ENCODE measurements at regions of chr3 and their contacts with region 1.

Region 1: DNA sequence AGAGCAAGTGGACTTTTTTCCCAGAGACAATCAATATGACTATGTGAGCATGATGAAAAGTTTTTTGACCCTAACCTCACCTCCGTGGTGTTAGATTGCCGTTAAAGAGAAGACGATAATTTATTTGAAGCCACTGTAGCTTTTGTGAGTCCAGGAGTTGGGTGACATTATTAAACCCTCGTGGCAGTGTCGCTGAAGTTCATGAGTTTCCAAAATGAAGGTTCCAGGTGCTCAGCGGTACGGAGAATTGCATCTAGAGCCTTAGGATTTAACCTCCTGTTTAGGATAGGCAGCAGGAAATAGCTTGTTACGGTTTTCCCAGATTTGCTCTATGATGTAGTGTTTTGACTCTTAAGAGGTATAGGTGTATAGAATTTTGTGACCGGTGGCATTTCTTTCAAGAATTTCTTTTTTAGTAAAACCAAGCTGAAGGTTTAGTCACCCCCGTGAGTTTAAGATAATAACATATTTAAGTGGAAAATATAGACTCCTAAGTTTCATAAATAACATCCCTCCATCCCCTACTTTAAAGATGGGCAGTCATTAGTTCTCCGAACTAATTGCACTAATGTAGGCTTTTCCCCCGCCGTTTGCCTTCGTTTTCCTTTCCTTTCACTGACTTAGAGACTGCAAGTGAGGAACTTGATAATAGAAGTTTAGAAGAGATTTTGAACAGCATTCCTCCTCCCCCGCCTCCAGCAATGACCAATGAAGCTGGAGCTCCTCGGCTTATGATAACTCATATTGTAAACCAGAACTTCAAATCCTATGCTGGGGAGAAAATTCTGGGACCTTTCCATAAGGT is 2.0 kb downstream of the SMC4 start:
- DNase-seq: peak; percentile 69
- H3K4me3 ChIP-seq: peak overlapping the region; percentile 69
- H3K27ac ChIP-seq: peak overlapping the region; percentile 96
- H3K4me1 ChIP-seq: peaks cover 19% of the 10 kb centered on the region
- H3K27me3 ChIP-seq: no peaks in the 10 kb centered on the region
- CTCF ChIP-seq: no peak

Region 2: DNA sequence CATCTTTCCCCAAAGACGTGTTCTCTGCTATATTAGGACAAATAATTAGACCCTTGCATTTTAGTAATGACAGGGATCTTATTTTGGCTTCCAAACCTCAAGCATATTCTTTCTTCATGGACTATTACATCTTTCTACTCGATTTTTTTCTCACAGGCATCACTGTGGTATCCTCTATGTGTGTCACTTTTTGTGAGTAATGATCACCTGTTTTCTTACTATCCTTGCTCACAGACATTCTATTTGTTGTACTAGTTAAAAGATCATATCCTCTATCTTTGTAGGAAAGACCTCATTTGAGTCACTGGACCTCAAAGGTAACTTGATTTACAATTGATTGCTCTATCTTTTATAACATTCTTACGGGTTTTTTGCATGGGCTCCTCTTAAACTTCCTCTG is 169.5 kb before region 1 on chr3:
- CTCF ChIA-PET with region 1: no interaction called
- POLR2A ChIA-PET with region 1: interaction called, 10 read pairs
- intact Hi-C with region 1: no loop called
- DNase-seq: no peak
- H3K4me3 ChIP-seq: no peak overlapping the region
- H3K27ac ChIP-seq: no peak overlapping the region
- H3K4me1 ChIP-seq: no peaks in the 10 kb centered on the region
- H3K27me3 ChIP-seq: peaks cover 38% of the 10 kb centered on the region
- CTCF ChIP-seq: no peak

Region 3: DNA sequence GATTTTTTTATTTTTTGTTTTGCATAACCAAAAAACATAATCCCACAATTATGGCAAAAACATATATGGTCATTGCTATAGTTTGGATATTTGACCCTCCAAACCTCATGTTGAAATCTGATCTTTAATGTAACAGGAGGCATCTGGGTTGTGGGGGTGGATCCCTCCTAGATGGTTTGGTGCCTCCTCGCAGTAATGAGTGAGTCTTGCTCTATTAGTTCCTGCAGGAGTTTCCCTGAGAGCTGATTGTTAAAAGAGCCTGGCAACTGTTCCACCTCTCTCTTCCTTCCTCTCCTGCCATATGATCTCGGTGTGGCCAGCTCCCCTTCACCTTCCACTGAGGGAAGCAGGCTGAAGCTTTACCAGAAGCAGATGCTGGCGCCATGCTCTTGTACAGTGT is 81.3 kb after region 1 on chr3:
- CTCF ChIA-PET with region 1: no interaction called
- POLR2A ChIA-PET with region 1: no interaction called
- intact Hi-C with region 1: no loop called
- DNase-seq: no peak
- H3K4me3 ChIP-seq: no peak overlapping the region
- H3K27ac ChIP-seq: no peak overlapping the region
- H3K4me1 ChIP-seq: no peaks in the 10 kb centered on the region
- H3K27me3 ChIP-seq: no peaks in the 10 kb centered on the region
- CTCF ChIP-seq: no peak